ENCODE measurements at regions of chr19 and their contacts with region 1.

Region 1: DNA sequence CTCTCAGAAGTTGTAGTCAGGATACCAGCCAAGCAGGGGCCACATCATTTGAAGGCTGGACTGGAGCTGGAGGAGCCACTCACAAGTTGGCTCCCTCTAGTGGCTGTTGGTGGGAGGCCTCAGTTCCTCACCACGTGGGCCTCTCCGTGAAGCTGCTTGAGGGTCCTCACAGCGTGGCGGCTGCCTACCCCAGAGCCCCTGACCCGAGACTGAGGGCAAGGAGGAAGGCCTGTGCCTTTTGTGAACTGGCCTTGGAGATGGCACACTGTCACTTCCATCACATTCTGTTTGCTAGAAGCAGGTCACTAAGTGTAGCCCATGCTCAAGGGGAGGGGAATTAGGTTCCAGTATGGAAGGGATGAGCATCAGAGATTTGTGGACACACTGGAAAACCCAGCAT is 14.6 kb downstream of the GNA11 start:
- DNase-seq: peak; percentile 66
- ATAC-seq: peak; percentile 31 to 42

Region 2: GRCh38 chr19:2969104-2969504 is 139.7 kb before region 1 on chr19:
- intact Hi-C with region 1: loop called (anchors 5 to 10 kb)
- DNase-seq: peak; percentile 73
- ATAC-seq: peak; percentile 53 to 62

Region 3: GRCh38 chr19:3062168-3063102 is 46.3 kb before region 1 on chr19 and contains the start of gene TLE5:
- intact Hi-C with region 1: no loop called
- DNase-seq: peak; percentile 81
- ATAC-seq: peak; percentile 70 to 83
- total RNA-seq, gene TLE5: 698 to 715 TPM